ENCODE measurements at regions of chrX and their contacts with region 1.

Region 1: DNA sequence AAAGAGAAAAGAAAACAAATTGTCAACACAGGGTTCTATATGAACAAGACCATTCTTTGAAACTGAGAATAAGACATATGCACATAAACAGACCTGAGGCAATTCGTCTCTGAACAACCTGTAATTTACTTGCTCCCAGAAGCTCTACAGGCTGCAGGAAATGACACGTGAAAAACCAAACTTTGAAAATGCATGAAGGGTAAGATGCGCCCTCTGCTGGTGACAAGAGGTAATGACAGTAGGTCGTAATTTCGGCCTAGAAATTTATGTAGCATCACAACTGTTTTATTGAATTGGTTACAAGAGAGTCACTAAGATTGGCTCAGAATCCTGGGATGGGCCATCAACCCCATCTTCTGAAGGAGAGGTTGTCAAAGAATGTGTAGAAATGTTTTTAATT is 276.5 kb downstream of the PPP4R3C start:
- DNase-seq: peak; percentile 0
- ATAC-seq: peak; percentile 62
- H3K4me3 ChIP-seq: no peak overlapping the region
- H3K27ac ChIP-seq: no peak overlapping the region
- H3K4me1 ChIP-seq: no peaks in the 10 kb centered on the region
- H3K27me3 ChIP-seq: no peaks in the 10 kb centered on the region
- CTCF ChIP-seq: peak; percentile 79 to 83 (median 83)
- EP300 ChIP-seq: no peak
- POLR2A ChIP-seq: no peak
- RAD21 ChIP-seq: peak; percentile 78

Region 2: GRCh38 chrX:26789751-26790150 is 396.9 kb before region 1 on chrX:
- CTCF ChIA-PET with region 1: interaction called, 49 read pairs
- POLR2A ChIA-PET with region 1: no interaction called
- RAD21 ChIA-PET with region 1: interaction called, 5 read pairs
- SMC1A ChIA-PET with region 1: interaction called, 37 read pairs
- in situ Hi-C with region 1: loop called (anchors 5 kb)
- intact Hi-C with region 1: no loop called
- DNase-seq: no peak
- ATAC-seq: no peak
- H3K4me3 ChIP-seq: no peak overlapping the region
- H3K27ac ChIP-seq: no peak overlapping the region
- H3K4me1 ChIP-seq: no peaks in the 10 kb centered on the region
- H3K27me3 ChIP-seq: no peaks in the 10 kb centered on the region
- CTCF ChIP-seq: no peak
- EP300 ChIP-seq: no peak
- POLR2A ChIP-seq: no peak
- RAD21 ChIP-seq: no peak

Region 3: GRCh38 chrX:26851981-26852380 is 334.7 kb before region 1 on chrX:
- CTCF ChIA-PET with region 1: interaction called, 26 read pairs
- POLR2A ChIA-PET with region 1: no interaction called
- RAD21 ChIA-PET with region 1: interaction called, 28 read pairs
- SMC1A ChIA-PET with region 1: interaction called, 21 read pairs
- in situ Hi-C with region 1: no loop called
- intact Hi-C with region 1: loop called (anchors 1 kb)
- DNase-seq: no peak
- ATAC-seq: peak; percentile 96
- H3K4me3 ChIP-seq: no peak overlapping the region
- H3K27ac ChIP-seq: no peak overlapping the region
- H3K4me1 ChIP-seq: no peaks in the 10 kb centered on the region
- H3K27me3 ChIP-seq: no peaks in the 10 kb centered on the region
- CTCF ChIP-seq: peak in 2 of 3 experiments; percentile 27 to 53; a peak in 3 of 6 replicates
- EP300 ChIP-seq: no peak
- POLR2A ChIP-seq: no peak
- RAD21 ChIP-seq: peak; percentile 64

Region 4: GRCh38 chrX:26918633-26919032 is 268.0 kb before region 1 on chrX:
- CTCF ChIA-PET with region 1: interaction called, 6 read pairs
- POLR2A ChIA-PET with region 1: no interaction called
- RAD21 ChIA-PET with region 1: interaction called, 6 read pairs
- SMC1A ChIA-PET with region 1: interaction called, 5 read pairs
- in situ Hi-C with region 1: no loop called
- intact Hi-C with region 1: loop called (anchors 5 kb)
- DNase-seq: no peak
- ATAC-seq: peak; percentile 87
- H3K4me3 ChIP-seq: no peak overlapping the region
- H3K27ac ChIP-seq: no peak overlapping the region
- H3K4me1 ChIP-seq: no peaks in the 10 kb centered on the region
- H3K27me3 ChIP-seq: no peaks in the 10 kb centered on the region
- CTCF ChIP-seq: peak; percentile 55 to 63 (median 60)
- EP300 ChIP-seq: no peak
- POLR2A ChIP-seq: no peak
- RAD21 ChIP-seq: peak; percentile 69

Region 5: GRCh38 chrX:27391623-27392022 is 205.0 kb after region 1 on chrX:
- CTCF ChIA-PET with region 1: no interaction called
- POLR2A ChIA-PET with region 1: no interaction called
- RAD21 ChIA-PET with region 1: no interaction called
- SMC1A ChIA-PET with region 1: no interaction called
- in situ Hi-C with region 1: no loop called
- intact Hi-C with region 1: no loop called
- DNase-seq: no peak
- ATAC-seq: no peak
- H3K4me3 ChIP-seq: no peak overlapping the region
- H3K27ac ChIP-seq: no peak overlapping the region
- H3K4me1 ChIP-seq: no peaks in the 10 kb centered on the region
- H3K27me3 ChIP-seq: no peaks in the 10 kb centered on the region
- CTCF ChIP-seq: no peak
- EP300 ChIP-seq: no peak
- POLR2A ChIP-seq: no peak
- RAD21 ChIP-seq: no peak

Measured in GM12878 (cell line).